SK-N-SH (cell line): ENCODE measurements at regions of chr14 and their contacts with region 1.

Region 1: GRCh38 chr14:52824507-52824906 is 33.1 kb upstream of the GNPNAT1 start:
- DNase-seq: no peak
- H3K4me3 ChIP-seq: no peak overlapping the region
- H3K27ac ChIP-seq: peak overlapping the region in 1 of 2 experiments; percentile 55; a peak in 2 of 4 replicates
- H3K4me1 ChIP-seq: peaks cover 4 to 13% of the 10 kb centered on the region in 2 experiments
- H3K27me3 ChIP-seq: no peaks in the 10 kb centered on the region
- CTCF ChIP-seq: no peak
- EP300 ChIP-seq: no peak
- RAD21 ChIP-seq: no peak

Region 2: DNA sequence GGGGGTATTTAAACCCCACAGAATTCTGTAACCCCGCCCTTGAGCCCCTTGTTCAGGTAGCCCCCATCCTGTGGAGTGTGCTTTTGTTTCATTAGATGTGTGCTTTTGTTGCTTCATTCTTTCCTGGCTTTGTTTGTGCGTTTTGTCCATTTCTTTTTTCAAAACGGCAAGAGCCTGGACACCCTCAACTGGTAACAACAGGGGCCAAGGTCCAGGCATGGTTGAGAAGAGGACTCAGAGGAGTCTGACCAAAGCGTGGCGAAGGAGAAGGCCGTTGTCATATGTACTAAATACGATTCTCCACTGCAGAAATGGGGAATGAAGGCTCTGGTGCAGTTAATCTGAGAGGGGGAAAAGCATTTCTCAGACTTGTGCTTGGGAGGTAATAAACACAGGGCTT is 12.9 kb after region 1 on chr14:
- CTCF ChIA-PET with region 1: interaction called, 12 read pairs
- POLR2A ChIA-PET with region 1: no interaction called
- DNase-seq: no peak
- H3K4me3 ChIP-seq: no peak overlapping the region
- H3K27ac ChIP-seq: no peak overlapping the region
- H3K4me1 ChIP-seq: peaks cover 20 to 45% of the 10 kb centered on the region in 2 experiments
- H3K27me3 ChIP-seq: no peaks in the 10 kb centered on the region
- CTCF ChIP-seq: no peak
- EP300 ChIP-seq: no peak
- RAD21 ChIP-seq: no peak

Region 3: GRCh38 chr14:53055003-53055402 is 230.5 kb after region 1 on chr14:
- CTCF ChIA-PET with region 1: interaction called, 14 read pairs
- POLR2A ChIA-PET with region 1: no interaction called
- DNase-seq: peak; percentile 45
- H3K4me3 ChIP-seq: no peak overlapping the region; a peak in 1 of 4 replicates
- H3K27ac ChIP-seq: no peak overlapping the region
- H3K4me1 ChIP-seq: peaks cover 0 to 4% of the 10 kb centered on the region in 2 experiments; a peak in 2 of 4 replicates
- H3K27me3 ChIP-seq: no peaks in the 10 kb centered on the region
- CTCF ChIP-seq: peak; percentile 87
- EP300 ChIP-seq: no peak
- RAD21 ChIP-seq: peak; percentile 82

Region 4: GRCh38 chr14:53109105-53110041 is 284.9 kb after region 1 on chr14:
- CTCF ChIA-PET with region 1: no interaction called
- POLR2A ChIA-PET with region 1: no interaction called
- DNase-seq: no peak
- H3K4me3 ChIP-seq: no peak overlapping the region
- H3K27ac ChIP-seq: no peak overlapping the region
- H3K4me1 ChIP-seq: no peaks in the 10 kb centered on the region
- H3K27me3 ChIP-seq: no peaks in the 10 kb centered on the region
- CTCF ChIP-seq: no peak
- EP300 ChIP-seq: no peak
- RAD21 ChIP-seq: no peak